Panc1 (cell line): ENCODE measurements at regions of chr7 and their contacts with region 1.

Region 1: DNA sequence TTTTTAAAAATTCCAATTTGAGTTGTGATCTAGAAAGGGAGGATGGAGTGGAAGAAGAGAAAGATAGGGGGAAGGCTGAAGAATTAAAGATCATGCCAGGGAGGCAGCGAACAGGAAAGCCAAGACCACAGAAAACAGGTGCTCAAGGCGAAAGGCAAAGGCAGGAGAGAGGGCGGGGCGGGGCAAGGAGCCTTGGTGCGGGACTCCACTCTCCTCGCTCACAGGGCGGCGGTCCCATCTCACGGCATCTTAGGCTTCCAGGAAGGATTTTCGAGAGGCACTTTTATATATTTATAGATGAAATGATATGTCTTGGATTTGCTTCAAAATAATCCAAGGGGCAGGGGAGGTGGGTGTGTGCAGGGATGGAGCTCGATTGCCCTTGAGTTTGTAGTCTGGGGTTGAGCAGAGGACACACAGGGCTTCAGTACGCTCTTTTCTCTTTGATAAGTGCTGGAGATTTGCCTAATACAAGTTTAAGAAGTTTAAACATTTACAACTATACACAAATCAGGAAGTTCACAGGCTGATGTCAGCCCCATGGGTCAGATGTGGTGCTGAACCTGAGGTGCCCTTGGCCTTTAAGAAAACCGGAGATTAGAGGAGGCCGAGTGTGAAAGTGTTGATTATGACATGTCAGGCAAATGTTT is 161.1 kb downstream of the PRKAG2 start:
- DNase-seq: no peak
- ATAC-seq: no peak
- H3K4me3 ChIP-seq: no peak overlapping the region
- H3K27ac ChIP-seq: peak overlapping the region; percentile 54; the same call in 1 of the 2 replicates
- H3K4me1 ChIP-seq: peaks cover 31% of the 10 kb centered on the region
- H3K27me3 ChIP-seq: no peaks in the 10 kb centered on the region
- CTCF ChIP-seq: no peak

Region 2: DNA sequence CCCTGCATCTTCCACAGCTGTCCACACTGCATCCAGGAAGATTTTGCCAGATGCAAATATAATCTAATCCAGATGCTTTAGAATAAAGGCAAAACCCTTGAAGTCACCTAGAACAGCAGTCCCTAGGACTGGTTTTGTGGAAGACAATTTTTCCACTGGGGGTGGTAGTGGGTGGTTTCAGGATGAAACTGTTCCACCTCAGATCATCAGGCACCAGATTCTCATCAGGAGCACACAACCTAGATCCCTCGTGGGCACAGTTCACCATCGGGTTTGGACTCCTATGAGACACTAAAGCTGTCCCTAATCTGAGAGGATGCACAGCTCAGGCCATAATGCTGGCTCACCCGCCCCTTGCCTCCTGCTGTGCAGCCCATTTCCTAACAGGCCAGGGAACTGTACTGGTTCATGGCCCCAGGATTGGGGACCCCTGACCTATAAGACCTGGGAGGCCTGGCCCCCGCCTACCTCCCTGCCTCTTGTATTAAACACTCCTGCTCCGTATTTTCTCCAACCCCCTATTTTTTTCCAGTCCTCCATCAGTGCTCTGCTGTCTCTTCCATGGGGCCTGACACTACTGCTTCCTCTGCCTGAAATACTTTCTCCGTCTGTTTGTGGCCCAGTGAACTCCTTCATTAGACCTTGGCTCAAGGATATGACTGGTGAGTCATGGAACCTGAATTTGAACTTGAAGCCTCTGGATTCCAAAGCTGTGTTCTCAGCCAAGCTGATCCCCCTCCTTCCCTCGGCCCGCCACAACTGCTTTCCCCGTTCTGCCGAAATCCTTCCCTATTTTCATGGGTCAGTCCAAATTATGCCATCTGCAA is 116.2 kb before region 1 on chr7:
- CTCF ChIA-PET with region 1: interaction called, 10 read pairs
- POLR2A ChIA-PET with region 1: no interaction called
- in situ Hi-C with region 1: no loop called
- intact Hi-C with region 1: no loop called
- DNase-seq: peak; percentile 73
- ATAC-seq: peak; percentile 85
- H3K4me3 ChIP-seq: peak overlapping the region; percentile 8 to 11; a peak in 2 of 4 replicates
- H3K27ac ChIP-seq: peak overlapping the region; percentile 99
- H3K4me1 ChIP-seq: peaks cover 57% of the 10 kb centered on the region
- H3K27me3 ChIP-seq: no peaks in the 10 kb centered on the region
- CTCF ChIP-seq: no peak